BJ (cell line): ENCODE measurements at regions of chr6 and their contacts with region 1.

Region 1: DNA sequence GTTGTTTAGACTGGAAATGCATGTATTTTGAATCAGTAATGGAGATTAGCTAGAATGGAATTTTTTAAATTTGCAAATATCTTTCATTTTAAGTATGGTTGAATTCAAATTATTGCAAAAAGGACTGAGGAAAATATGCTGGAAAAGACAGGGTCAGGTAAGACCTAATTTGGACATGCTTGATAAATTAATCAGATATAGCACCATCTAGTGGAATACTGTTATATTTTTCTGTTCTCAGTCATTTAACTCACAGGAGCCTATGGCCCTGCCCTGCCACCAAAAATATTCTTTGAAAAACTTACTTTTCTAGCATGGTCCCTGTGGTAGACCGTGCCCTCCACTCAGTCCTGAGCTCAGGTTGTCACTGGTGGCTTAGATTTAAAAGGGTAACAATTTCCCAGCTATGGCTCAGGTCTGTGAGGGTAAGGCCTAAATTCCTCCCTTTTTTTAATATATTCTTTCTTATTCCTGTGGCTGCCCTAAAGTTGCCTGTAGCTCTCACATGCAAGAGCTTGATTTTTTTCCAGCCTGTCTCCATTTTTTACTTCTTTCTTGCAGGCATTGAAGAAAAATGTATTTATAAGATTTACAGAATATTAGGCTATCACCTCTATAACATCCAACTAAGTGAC is 25.3 kb upstream of the KIAA1586 start:
- DNase-seq: peak; percentile 19
- H3K4me3 ChIP-seq: no peak overlapping the region
- H3K27me3 ChIP-seq: no peaks in the 10 kb centered on the region
- CTCF ChIP-seq: peak; percentile 43

Region 2: DNA sequence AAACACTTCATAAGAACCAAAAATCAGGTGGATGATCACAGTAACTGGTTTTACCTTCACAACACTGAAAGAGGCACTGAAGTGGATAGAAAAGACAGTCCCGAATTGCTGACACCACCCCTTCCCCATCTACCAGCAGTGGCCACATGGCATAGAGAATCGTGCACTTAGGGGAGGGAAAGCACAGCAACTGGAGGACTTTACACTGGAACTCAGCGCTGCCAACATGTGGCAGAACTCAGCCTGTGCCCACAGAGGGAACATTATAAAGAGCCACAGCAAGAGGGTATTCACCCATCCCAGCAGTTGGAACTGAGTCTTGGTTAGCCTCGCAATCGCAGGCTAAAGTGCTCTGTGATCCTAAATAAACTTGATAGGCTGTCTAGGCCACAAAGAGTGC is 18.8 kb after region 1 on chr6:
- CTCF ChIA-PET with region 1: interaction called, 15 read pairs
- POLR2A ChIA-PET with region 1: no interaction called
- DNase-seq: no peak
- H3K4me3 ChIP-seq: no peak overlapping the region
- H3K27me3 ChIP-seq: peaks cover 1% of the 10 kb centered on the region
- CTCF ChIP-seq: no peak

Region 3: DNA sequence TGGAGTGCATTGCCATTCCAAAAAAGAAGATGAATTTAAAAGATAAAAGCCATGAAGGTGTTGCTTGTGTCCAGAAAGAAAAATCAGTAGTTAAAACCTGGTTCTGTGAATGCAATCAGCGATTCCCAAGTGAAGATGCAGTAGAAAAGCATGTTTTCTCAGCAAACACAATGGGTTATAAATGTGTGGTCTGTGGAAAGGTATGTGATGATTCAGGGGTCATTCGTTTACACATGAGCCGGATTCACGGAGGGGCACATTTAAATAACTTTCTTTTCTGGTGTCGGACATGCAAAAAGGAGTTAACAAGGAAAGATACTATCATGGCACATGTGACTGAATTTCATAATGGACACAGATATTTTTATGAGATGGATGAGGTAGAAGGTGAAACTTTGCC is 126.2 kb after region 1 on chr6:
- CTCF ChIA-PET with region 1: no interaction called
- POLR2A ChIA-PET with region 1: no interaction called
- DNase-seq: no peak
- H3K4me3 ChIP-seq: no peak overlapping the region
- H3K27me3 ChIP-seq: no peaks in the 10 kb centered on the region
- CTCF ChIP-seq: no peak